Common myeloid progenitor, CD34-positive (primary cell): ENCODE measurements at regions of chr1 and their contacts with region 1.

Region 1: GRCh38 chr1:8571200-8571984 is 246.0 kb downstream of the RERE start:
- DNase-seq: peak; percentile 55 to 75 (median 68)
- H3K4me3 ChIP-seq: peak overlapping the region in 1 of 7 experiments; percentile 30
- H3K27ac ChIP-seq: peak overlapping the region; percentile 30 to 70
- H3K4me1 ChIP-seq: peaks cover 0 to 18% (median 9%) of the 10 kb centered on the region in 4 experiments
- H3K27me3 ChIP-seq: no peaks in the 10 kb centered on the region

Region 2: DNA sequence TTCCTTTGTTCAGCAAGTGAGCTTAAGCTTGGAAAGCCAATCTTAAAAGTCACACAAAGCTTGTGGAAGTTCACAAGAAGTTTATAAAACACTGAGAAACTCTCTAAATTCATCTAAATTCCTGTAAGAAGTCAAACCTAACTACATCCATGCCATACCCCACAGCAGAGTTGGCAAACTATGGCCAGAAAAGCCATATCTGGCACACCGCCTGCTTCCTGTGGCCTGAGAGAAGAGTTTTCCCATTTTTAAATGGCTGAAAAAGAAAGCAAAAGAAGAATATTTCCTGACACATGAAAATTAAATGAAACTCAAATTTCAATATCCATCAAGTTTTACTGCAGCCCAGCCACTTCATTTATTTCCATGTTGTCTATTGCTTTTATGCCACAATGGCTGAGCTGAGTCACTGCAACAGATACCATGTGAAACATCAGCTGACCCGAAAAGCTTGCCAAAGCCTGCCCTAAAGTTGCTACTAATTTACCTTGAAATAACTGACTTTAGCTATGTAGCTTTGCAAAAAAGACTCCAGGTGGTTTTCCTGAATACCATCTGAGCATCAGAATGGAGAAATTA is 16.3 kb before region 1 on chr1:
- CTCF ChIA-PET with region 1: interaction called, 27 read pairs
- POLR2A ChIA-PET with region 1: no interaction called
- DNase-seq: peak in 2 of 3 donors; percentile 50 to 64
- H3K4me3 ChIP-seq: no peak overlapping the region
- H3K27ac ChIP-seq: peak overlapping the region in 1 of 2 experiments; percentile 7
- H3K4me1 ChIP-seq: peaks cover 0 to 6% (median 3%) of the 10 kb centered on the region in 4 experiments
- H3K27me3 ChIP-seq: no peaks in the 10 kb centered on the region